Posterior cingulate gyrus (tissue), 11 donors: ENCODE measurements at regions of chr12 and their contacts with region 1.

Region 1: DNA sequence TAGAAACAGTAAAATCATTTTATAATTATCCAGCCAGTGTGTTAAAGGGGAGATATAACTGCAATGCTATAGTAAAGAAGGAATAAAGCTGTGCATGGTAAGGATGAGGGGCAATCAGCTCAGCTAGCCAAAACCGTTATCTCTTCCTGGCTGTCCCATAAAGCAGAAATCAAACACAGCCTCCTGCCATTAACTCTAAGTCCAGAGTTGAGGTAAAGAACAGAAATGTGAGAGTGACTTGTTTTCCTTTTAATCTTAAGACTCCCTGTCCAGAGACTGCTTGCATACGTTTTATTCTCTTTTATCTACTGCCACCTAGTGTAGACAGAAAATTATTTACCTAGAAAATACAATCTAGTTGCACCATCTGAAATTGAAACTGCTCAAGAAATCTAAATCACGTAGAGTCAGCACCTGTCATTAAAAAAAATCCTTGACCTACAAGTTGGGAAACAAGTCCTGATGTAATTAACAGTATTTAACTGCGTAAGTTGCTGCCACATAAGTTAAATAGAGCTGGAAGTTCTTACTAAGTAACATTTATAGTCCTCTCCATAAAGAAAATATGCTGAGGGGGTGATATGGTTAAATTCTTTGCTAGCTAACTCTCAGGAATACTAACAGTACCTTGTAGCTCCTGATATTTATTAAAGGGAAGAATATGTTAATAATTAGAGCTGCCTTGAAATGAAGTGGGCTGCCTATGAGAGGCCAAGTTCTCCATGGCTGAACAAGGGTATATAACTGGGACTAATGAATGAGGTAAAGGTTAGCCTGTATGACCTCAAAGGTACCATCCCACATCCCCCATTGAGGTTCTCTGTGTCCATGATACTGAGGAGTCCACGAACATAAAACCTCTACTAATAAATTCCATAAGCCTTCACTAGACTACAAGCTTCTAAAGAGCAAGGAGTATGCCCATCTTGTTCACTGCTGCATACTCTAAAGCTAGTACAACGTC is 62.7 kb downstream of the GALNT4 start:
- DNase-seq: no peak

Region 2: DNA sequence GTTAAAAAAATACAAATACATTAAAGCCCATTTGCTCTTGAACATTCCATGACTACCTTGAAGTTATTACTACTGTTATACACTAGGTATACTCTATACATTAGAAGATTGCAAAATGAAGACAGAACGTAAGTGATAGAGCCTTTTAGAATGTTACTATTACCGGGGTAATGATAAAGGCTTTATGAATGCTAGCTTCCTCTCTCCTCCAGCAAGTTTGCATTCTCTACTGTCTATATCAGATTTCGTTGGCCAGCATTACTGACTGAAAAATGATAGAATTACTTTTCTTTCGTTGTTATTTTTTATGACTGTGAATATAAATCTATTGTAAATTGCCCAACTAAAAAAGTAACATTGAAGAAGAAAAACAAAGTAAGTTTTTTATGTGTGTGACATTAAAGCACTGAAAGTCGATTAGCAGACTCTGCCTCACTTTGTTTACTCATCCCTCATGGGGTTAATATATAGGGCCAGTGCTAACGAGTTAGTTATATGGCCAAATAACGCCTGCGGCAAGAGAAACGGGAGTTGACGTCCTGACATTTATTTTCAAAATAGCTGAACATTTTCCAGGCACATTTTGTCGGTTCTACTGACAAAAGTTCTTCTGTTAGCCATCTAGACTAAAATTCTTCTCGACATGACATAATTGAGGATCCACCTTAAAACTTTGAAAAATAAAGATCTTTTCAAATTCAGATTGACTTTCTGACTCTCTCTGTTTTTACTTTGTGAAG is 717.8 kb before region 1 on chr12:
- intact Hi-C with region 1: no loop called
- DNase-seq: no peak

Region 3: DNA sequence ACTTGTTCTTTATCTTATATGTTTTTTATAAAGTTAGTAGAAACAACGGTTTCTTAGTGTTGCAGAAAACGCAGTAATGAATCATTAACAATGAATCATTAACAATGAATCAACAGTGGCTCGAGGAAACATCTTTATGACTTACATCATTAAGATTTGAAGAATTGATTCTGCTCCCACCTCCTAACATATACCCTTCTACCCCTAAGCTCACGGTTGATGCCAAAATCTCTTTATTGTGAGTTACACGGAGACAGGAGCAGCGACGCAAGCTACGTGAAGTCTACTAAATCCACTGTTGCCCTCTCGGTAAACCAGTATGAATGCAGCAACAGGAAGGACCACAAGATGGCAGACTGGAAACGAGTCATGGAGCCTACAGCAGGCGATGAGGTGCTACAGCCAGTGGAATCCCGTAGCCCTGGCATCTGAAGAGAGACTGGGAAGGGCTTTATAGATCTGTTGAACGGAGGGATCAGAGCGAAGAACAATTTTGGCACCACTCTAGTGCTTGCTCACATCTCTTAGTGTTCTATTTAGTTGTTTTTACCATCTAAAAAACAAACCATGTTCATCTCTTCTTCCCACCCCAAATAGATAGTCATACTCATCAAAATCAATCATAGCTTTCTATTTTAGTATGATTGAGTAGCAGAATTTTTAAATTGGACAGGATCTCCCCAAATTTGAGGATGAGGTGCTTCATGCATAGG is 442.4 kb before region 1 on chr12:
- intact Hi-C with region 1: loop called (anchors 1 kb)
- DNase-seq: peak; percentile 43 to 95 (median 78)

Region 4: GRCh38 chr12:89051065-89051677 is 410.8 kb before region 1 on chr12:
- intact Hi-C with region 1: loop called (anchors 1 kb)
- DNase-seq: no peak

Region 5: GRCh38 chr12:89352492-89353187 is 109.3 kb before region 1 on chr12 and contains the start of gene DUSP6:
- intact Hi-C with region 1: loop called (anchors 5 kb)
- DNase-seq: peak; percentile 83 to 99 (median 92)

Region 6: GRCh38 chr12:89529738-89530137 is 67.8 kb after region 1 on chr12:
- intact Hi-C with region 1: no loop called
- DNase-seq: no peak